ENCODE measurements at regions of chr16 and their contacts with region 1.

Region 1: GRCh38 chr16:70653809-70654771 is 7.7 kb downstream of the IL34 start:
- DNase-seq: no peak
- H3K4me3 ChIP-seq: peak overlapping the region in 3 of 4 donors; percentile 17 to 51 (median 23)
- H3K27ac ChIP-seq: peak overlapping the region in 2 of 4 donors; percentile 36 to 57
- H3K4me1 ChIP-seq: peaks cover 4 to 50% (median 5%) of the 10 kb centered on the region in 3 donors
- H3K27me3 ChIP-seq: no peaks in the 10 kb centered on the region
- CTCF ChIP-seq: peak; percentile 86 to 97 (median 92)
- POLR2A ChIP-seq: no peak

Region 2: GRCh38 chr16:70364399-70364798 is 289.7 kb before region 1 on chr16:
- intact Hi-C with region 1: loop called (anchors 10 kb)
- DNase-seq: no peak
- H3K4me3 ChIP-seq: no peak overlapping the region
- H3K27ac ChIP-seq: no peak overlapping the region
- H3K4me1 ChIP-seq: no peaks in the 10 kb centered on the region
- H3K27me3 ChIP-seq: no peaks in the 10 kb centered on the region
- CTCF ChIP-seq: no peak
- POLR2A ChIP-seq: no peak

Region 3: GRCh38 chr16:70523076-70523742 is 130.9 kb before region 1 on chr16 and contains the start of gene COG4:
- intact Hi-C with region 1: loop called (anchors 5 kb)
- DNase-seq: peak; percentile 37
- H3K4me3 ChIP-seq: peak within 1 kb of the TSS; percentile 60 to 96 (median 88)
- H3K27ac ChIP-seq: peak within 1 kb of the TSS; percentile 86 to 93 (median 92)
- H3K4me1 ChIP-seq: peaks cover 15 to 56% (median 37%) of the 10 kb centered on the region in 3 donors
- H3K27me3 ChIP-seq: no peaks in the 10 kb centered on the region
- CTCF ChIP-seq: no peak
- POLR2A ChIP-seq: peak in 1 of 4 donors; percentile 16
- total RNA-seq, gene COG4: 40.3 to 54.0 (median 47.5) TPM

Region 4: GRCh38 chr16:70540994-70541393 is 113.1 kb before region 1 on chr16:
- intact Hi-C with region 1: no loop called
- DNase-seq: no peak
- H3K4me3 ChIP-seq: no peak overlapping the region
- H3K27ac ChIP-seq: no peak overlapping the region
- H3K4me1 ChIP-seq: peaks cover 0 to 6% (median 0%) of the 10 kb centered on the region in 3 donors
- H3K27me3 ChIP-seq: no peaks in the 10 kb centered on the region
- CTCF ChIP-seq: no peak
- POLR2A ChIP-seq: no peak

Region 5: GRCh38 chr16:70604407-70605283 is 49.4 kb before region 1 on chr16:
- intact Hi-C with region 1: no loop called
- DNase-seq: no peak
- H3K4me3 ChIP-seq: no peak overlapping the region
- H3K27ac ChIP-seq: no peak overlapping the region
- H3K4me1 ChIP-seq: peaks cover 0 to 32% (median 2%) of the 10 kb centered on the region in 3 donors
- H3K27me3 ChIP-seq: no peaks in the 10 kb centered on the region
- CTCF ChIP-seq: no peak
- POLR2A ChIP-seq: no peak